ENCODE measurements at regions of chr18 and their contacts with region 1.

Region 1: GRCh38 chr18:10032331-10033015 is 118.7 kb downstream of the VAPA start:
- DNase-seq: peak; percentile 27
- H3K4me3 ChIP-seq: no peak overlapping the region
- H3K27ac ChIP-seq: no peak overlapping the region
- H3K4me1 ChIP-seq: peaks cover 3% of the 10 kb centered on the region
- H3K27me3 ChIP-seq: no peaks in the 10 kb centered on the region
- CTCF ChIP-seq: peak; percentile 56 to 66
- POLR2A ChIP-seq: no peak

Region 2: DNA sequence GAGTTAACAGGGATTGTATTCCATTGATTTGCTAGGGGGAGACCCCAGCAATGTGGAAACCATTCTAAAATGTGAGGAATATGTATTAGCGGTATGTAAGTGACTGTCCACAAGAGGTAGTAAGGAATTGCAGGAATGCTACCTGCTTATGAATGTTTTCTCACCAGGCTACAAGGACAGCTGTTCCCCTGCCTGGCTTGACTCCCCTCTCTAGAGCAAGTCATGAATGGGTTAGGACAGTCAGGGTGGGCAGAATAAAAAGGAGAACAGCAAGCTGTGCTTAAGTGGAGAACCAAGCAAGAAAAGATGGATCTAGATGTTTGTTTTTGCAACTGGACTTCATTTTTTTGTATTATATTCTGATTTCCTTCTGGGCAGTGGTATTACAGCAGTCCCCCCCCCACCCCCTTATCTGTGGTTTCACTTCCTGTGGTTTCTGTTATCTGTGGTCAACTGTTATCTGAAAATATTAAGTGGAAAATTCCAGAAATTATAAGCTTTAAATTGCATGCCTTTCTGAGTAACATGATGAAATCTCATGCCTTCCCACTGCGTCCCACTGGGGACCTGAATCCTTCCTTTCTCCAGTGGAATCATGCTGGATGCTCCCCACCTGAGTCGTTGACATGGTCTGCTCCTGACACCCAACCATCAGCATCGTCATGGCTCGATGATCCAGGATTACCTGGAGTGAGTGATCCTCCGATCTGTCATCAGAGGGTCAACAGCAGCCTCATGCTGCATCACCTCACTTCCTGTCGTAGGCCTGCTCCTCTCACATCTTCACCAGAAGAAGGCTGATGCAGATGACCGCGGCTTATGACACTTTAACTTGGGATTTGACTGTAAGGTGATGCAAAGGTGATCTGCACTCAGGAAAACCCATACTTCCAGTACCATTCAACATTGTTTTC is 66.5 kb before region 1 on chr18:
- CTCF ChIA-PET with region 1: interaction called, 3 read pairs
- POLR2A ChIA-PET with region 1: interaction called, 10 read pairs
- dilution Hi-C with region 1: no loop called
- intact Hi-C with region 1: loop called (anchors 5 kb)
- DNase-seq: no peak
- H3K4me3 ChIP-seq: no peak overlapping the region
- H3K27ac ChIP-seq: no peak overlapping the region
- H3K4me1 ChIP-seq: peaks cover 11% of the 10 kb centered on the region
- H3K27me3 ChIP-seq: peaks cover 4 to 10% of the 10 kb centered on the region in 2 experiments
- CTCF ChIP-seq: no peak
- POLR2A ChIP-seq: no peak

Region 3: DNA sequence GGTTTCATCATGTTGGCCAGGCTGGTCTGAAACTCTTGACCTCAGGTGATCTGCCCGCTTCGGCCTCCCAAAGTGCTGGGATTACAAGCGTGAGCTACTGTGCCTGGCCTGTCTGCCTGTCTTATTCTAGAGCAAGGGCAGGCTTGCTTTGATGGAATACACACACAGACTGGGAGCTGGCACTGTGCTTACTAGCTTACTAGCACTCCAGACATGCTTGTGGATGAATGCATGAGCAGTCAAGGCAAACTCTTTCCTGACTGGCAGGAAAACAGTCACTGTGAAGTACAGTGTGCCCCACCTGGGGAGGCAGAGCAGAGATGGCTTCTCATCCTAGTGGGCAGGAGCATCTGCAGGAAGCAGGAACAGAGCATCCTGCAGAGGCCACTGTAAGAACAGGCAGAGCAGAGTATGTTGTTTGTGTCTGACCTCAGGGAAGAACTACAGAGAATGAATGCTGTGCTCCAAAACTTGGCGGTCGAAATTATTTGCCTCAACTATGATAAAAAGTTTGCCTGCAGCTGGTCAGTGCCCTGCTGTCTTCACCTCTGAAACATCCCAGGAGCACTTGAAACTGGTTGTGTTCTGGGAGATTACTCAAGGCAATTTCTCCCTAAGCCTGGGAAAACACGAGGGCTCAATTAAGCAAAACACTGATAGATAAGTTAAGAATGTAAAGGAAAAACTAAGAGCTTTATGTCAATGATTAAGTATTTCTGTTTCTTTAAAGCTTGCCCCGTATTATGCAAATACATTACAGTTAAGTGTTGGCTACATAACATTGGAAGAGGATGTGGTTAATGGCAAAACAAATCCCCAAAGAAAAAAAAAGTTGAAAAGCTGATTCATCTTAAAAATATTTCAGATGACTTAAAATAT is 16.3 kb before region 1 on chr18:
- CTCF ChIA-PET with region 1: interaction called, 12 read pairs
- POLR2A ChIA-PET with region 1: no interaction called
- dilution Hi-C with region 1: no loop called
- intact Hi-C with region 1: no loop called
- DNase-seq: peak; percentile 47
- H3K4me3 ChIP-seq: no peak overlapping the region
- H3K27ac ChIP-seq: peak overlapping the region; percentile 44
- H3K4me1 ChIP-seq: peaks cover 17% of the 10 kb centered on the region
- H3K27me3 ChIP-seq: no peaks in the 10 kb centered on the region
- CTCF ChIP-seq: peak in 1 of 2 donors; percentile 10
- POLR2A ChIP-seq: no peak

Region 4: DNA sequence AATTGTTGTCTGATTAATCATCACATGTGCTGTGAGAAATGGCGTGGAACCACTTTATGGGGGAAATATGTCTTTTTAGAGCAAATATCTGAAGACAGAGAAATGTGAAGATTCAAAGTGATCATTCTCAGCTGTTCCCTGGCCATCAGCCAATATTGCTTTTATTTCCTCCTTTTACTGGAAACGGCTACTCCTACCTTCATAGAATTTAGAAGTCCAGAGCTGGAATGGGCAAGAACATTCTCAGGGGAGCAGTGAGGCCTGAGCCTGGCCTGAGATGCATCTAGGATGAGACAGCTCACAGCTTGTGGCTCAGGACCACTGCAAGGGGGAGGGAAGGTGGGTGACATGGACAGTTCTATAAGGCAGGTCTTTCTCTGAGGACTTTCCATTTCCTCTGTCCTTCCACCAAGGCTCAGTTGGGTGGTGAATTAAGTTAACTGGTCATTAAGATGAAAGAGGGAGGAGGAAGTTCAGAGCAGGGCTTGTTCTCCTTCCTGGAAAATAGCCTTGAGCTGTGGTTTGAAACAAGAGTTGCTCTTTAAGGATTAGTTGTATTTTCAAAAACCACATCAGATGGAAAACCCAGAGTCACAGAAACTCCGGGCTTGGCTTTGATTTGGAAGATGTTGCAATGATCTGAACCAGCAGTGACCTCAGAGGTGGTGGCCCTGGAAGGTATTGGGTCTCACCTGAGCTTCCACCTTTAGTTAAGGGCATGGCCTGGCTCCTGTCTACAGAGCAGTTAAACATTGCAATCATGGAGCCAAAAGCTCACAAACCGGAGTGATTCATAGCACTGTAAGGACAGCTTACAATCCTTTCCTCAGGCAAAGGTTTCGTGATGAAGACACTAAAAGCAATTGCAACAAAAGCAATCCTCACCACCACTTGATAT is 25.7 kb after region 1 on chr18:
- CTCF ChIA-PET with region 1: interaction called, 7 read pairs
- POLR2A ChIA-PET with region 1: no interaction called
- dilution Hi-C with region 1: no loop called
- intact Hi-C with region 1: loop called (anchors 2 kb)
- DNase-seq: peak; percentile 66
- H3K4me3 ChIP-seq: no peak overlapping the region
- H3K27ac ChIP-seq: peak overlapping the region; percentile 96
- H3K4me1 ChIP-seq: peaks cover 56% of the 10 kb centered on the region
- H3K27me3 ChIP-seq: no peaks in the 10 kb centered on the region
- CTCF ChIP-seq: no peak
- POLR2A ChIP-seq: peak; percentile 27

Region 5: GRCh38 chr18:10519999-10520935 is 487.8 kb after region 1 on chr18:
- CTCF ChIA-PET with region 1: interaction called, 50 read pairs
- POLR2A ChIA-PET with region 1: no interaction called
- dilution Hi-C with region 1: no loop called
- intact Hi-C with region 1: loop called (anchors 1 kb)
- DNase-seq: peak; percentile 86
- H3K4me3 ChIP-seq: no peak overlapping the region
- H3K27ac ChIP-seq: no peak overlapping the region
- H3K4me1 ChIP-seq: no peaks in the 10 kb centered on the region
- H3K27me3 ChIP-seq: peaks cover 32 to 49% of the 10 kb centered on the region in 2 experiments
- CTCF ChIP-seq: peak; percentile 72 to 81
- POLR2A ChIP-seq: no peak

Measured in endothelial cell of umbilical vein (primary cell).